Astrocyte of the spinal cord (primary cell): ENCODE measurements at regions of chr11 and their contacts with region 1.

Region 1: GRCh38 chr11:44538375-44539054 is 26.9 kb upstream of the CD82 start:
- DNase-seq: peak; percentile 59
- H3K4me3 ChIP-seq: no peak overlapping the region
- CTCF ChIP-seq: peak; percentile 93

Region 2: GRCh38 chr11:44110231-44110679 is 428.3 kb before region 1 on chr11:
- in situ Hi-C with region 1: loop called (anchors 25 kb)
- DNase-seq: peak; percentile 49
- H3K4me3 ChIP-seq: no peak overlapping the region
- CTCF ChIP-seq: peak; percentile 85

Region 3: DNA sequence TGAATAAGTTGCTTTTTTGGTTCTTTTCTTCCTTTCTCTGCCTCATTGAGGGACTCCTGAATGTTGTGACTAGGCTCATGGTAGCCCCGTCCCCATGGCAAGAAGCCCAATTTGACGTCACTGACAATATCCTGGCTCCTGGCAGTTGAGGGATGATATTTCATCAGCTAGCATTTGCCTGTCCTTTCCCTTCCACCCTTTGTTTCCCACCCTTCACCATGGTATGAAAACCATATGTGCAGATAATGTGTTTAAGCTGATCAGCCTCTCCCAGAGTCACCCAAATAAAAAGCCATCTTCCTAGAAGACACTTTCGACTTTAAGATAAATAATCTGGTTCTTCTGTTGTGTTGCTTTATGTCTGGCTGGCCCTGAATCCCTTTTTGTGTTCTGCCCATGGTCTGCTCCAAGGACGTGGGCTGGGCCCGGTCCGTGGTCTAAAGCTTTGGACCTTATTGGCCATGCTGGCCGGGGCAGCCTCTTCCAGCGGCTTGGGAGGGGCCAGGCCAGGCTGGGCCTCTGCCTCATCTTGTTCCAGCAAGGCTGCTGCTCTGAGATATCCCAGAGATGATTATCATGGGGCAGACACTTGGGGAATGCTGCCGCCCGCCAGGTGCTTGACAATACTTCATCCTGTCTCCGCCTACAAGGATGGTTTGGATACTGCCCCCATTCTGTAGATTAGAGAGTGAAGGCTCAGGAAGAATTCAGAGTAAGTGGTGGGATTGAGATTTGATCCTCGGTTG is 193.3 kb after region 1 on chr11:
- in situ Hi-C with region 1: no loop called
- DNase-seq: no peak
- H3K4me3 ChIP-seq: no peak overlapping the region
- CTCF ChIP-seq: no peak